Common myeloid progenitor, CD34-positive (primary cell): ENCODE measurements at regions of chr11 and their contacts with region 1.

Region 1: GRCh38 chr11:33829433-33830141 is 55.3 kb upstream of the FBXO3 start:
- DNase-seq: peak; percentile 73 to 86 (median 83)
- H3K4me3 ChIP-seq: peak overlapping the region in 6 of 7 experiments; percentile 20 to 75 (median 58)
- H3K27ac ChIP-seq: no peak overlapping the region
- H3K4me1 ChIP-seq: peaks cover 0 to 12% (median 8%) of the 10 kb centered on the region in 4 experiments
- H3K27me3 ChIP-seq: peaks cover 9 to 35% (median 17%) of the 10 kb centered on the region in 5 experiments

Region 2: DNA sequence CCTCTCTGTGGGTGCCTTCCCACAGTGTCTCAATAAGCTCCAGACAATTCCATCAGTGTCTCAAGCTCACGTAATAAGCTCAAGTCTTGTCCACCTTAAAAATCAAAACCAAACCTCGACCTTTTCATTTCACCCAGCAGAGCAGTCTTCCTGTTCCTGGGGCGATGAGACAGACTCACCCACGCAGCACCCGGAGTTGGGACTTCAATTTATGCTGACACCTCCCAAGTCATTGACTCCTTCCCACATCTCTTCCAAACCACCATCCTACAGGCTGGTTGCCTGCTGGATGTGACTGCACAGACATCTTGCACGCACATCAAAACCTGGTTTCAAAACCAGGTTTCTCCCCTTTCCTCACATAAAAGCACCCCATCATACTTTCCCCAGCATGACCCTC is 10.3 kb before region 1 on chr11:
- CTCF ChIA-PET with region 1: interaction called, 52 read pairs
- POLR2A ChIA-PET with region 1: no interaction called
- DNase-seq: no peak
- H3K4me3 ChIP-seq: no peak overlapping the region
- H3K27ac ChIP-seq: no peak overlapping the region
- H3K4me1 ChIP-seq: no peaks in the 10 kb centered on the region
- H3K27me3 ChIP-seq: peaks cover 0 to 28% (median 13%) of the 10 kb centered on the region in 5 experiments